ENCODE measurements at regions of chr17 and their contacts with region 1.

Region 1: GRCh38 chr17:5592382-5592781 is 8.1 kb upstream of the NLRP1 start:
- DNase-seq: no peak
- H3K4me3 ChIP-seq: no peak overlapping the region
- H3K27ac ChIP-seq: no peak overlapping the region
- H3K4me1 ChIP-seq: no peaks in the 10 kb centered on the region
- H3K27me3 ChIP-seq: peaks cover 0 to 36% of the 10 kb centered on the region in 2 donors
- CTCF ChIP-seq: peak; percentile 50 to 65

Region 2: GRCh38 chr17:6045621-6046357 is 453.4 kb after region 1 on chr17:
- intact Hi-C with region 1: loop called (anchors 5 kb)
- DNase-seq: no peak
- H3K4me3 ChIP-seq: no peak overlapping the region
- H3K27ac ChIP-seq: no peak overlapping the region
- H3K4me1 ChIP-seq: no peaks in the 10 kb centered on the region
- H3K27me3 ChIP-seq: no peaks in the 10 kb centered on the region
- CTCF ChIP-seq: peak; percentile 11 to 16

Measured in tibial artery (tissue), 4 donors.